ENCODE measurements at regions of chr11 and their contacts with region 1.

Region 1: GRCh38 chr11:85854557-85855340 is 434 bp upstream of the CCDC83 start:
- DNase-seq: peak; percentile 95
- ATAC-seq: peak; percentile 99

Region 2: DNA sequence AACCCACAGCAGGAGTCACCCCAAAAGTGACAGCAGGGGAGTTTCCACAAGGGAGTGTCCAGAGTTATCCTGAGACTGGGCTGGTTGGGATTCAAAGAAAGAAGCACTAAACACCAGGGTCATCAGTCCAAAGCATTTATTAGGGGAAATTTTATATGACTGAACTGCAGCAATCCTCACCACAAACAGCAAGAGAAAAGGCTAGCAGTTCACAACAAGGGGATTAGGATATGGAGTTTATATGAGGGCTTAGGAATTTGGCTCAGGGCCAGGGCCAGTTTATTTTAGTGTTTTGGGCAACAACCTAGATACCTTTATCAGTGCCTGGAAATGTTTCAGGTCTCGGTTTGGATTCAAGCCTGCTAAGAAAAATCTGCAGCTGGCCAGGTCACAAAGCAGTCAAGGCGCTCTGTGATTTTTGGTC is 211.5 kb before region 1 on chr11:
- intact Hi-C with region 1: no loop called
- DNase-seq: peak; percentile 47
- ATAC-seq: peak; percentile 53

Region 3: GRCh38 chr11:85955531-85955930 is 100.8 kb after region 1 on chr11:
- intact Hi-C with region 1: no loop called
- DNase-seq: no peak
- ATAC-seq: peak; percentile 54

Region 4: DNA sequence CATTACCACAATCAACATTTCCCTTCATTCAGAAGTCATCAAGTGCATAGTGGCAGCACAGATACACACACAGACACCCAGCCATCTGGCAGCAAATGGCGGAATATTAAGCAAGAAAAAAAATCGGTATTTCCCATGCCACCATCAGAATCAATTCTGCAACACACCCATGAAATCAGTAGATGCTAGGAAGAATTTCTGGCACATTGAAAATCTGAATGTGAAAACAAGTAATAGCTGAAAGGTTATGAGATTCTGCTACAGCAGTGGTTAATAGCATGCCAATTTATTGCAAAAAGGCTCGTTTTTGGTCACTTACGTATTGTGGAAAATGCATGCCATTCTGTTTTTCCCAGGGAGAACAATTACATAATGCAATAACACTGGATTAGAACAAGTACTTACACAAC is 123.0 kb after region 1 on chr11:
- intact Hi-C with region 1: no loop called
- DNase-seq: no peak
- ATAC-seq: peak; percentile 81

Region 5: GRCh38 chr11:86218125-86219084 is 363.7 kb after region 1 on chr11:
- intact Hi-C with region 1: loop called (anchors 10 kb)
- DNase-seq: peak; percentile 68
- ATAC-seq: peak; percentile 92

Measured in left ventricle myocardium superior (tissue), 1 donor.